PC-3 (cell line): ENCODE measurements at regions of chr12 and their contacts with region 1.

Region 1: GRCh38 chr12:64801381-64801780 is 23.1 kb upstream of the TBC1D30 start:
- DNase-seq: peak; percentile 68
- ATAC-seq: peak; percentile 55
- H3K4me3 ChIP-seq: no peak overlapping the region
- H3K27ac ChIP-seq: no peak overlapping the region
- H3K4me1 ChIP-seq: peaks cover 23% of the 10 kb centered on the region
- H3K27me3 ChIP-seq: no peaks in the 10 kb centered on the region
- CTCF ChIP-seq: peak; percentile 77

Region 2: DNA sequence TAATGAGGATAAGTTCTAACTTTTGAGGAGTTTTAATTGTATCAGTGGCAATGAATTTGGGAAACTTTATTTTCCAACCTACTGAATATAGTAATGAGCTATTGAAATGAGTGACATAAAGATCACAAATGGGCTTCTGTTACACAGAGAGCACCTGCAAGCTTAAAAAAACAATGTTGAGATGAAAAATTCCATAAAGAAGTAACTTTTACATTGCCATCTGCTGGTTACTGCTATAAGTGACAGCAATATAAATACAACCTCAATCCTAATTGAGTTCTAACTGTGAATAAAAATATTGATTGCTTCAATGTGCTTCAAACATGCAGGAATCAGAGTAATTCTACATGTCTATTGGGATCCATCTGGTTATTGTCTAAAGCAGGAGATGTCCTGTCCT is 305.6 kb after region 1 on chr12:
- CTCF ChIA-PET with region 1: interaction called, 19 read pairs
- POLR2A ChIA-PET with region 1: no interaction called
- intact Hi-C with region 1: loop called (anchors 2 kb)
- DNase-seq: peak; percentile 56
- ATAC-seq: peak; percentile 18; the same call in 1 of the 2 replicates
- H3K4me3 ChIP-seq: no peak overlapping the region
- H3K27ac ChIP-seq: no peak overlapping the region
- H3K4me1 ChIP-seq: no peaks in the 10 kb centered on the region
- H3K27me3 ChIP-seq: no peaks in the 10 kb centered on the region
- CTCF ChIP-seq: peak; percentile 72

Region 3: DNA sequence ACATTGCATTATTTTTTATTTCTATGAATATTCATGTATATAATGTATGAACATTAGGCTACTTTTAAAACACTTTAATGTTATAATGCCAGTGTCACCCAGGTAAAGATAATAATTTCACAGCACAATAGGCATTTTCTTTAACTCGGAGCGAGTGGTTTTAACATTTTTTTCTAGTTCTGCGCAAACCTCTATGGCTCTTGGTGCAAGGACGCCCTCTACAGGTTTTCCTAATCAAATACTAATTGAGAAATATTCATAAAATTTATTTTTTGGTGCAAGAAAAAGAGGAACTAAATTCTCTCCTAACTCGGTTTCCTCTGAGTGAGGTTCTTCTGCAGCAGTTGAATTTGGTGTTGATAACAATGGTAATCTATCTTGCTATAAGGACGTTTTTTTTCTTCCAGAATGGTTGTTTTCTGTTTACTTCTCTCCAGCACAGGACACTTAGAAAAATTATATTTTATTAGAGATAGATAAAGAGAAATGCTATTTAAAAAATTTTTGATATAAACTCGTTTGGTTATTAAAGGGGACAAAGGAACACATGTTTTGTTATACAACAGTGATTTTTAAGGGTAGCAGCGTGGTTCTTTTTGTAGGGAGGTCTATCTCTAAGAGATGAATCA is 322.2 kb after region 1 on chr12:
- CTCF ChIA-PET with region 1: interaction called, 7 read pairs
- POLR2A ChIA-PET with region 1: no interaction called
- intact Hi-C with region 1: loop called (anchors 1 kb)
- DNase-seq: peak; percentile 66
- ATAC-seq: no peak; the same call in 1 of the 2 replicates
- H3K4me3 ChIP-seq: no peak overlapping the region
- H3K27ac ChIP-seq: no peak overlapping the region
- H3K4me1 ChIP-seq: peaks cover 7% of the 10 kb centered on the region
- H3K27me3 ChIP-seq: peaks cover 51% of the 10 kb centered on the region
- CTCF ChIP-seq: peak; percentile 86